HCT116 (cell line): ENCODE measurements at regions of chr3 and their contacts with region 1.

Region 1: GRCh38 chr3:187745201-187746058 is at the start of gene BCL6:
- DNase-seq: peak; percentile 98
- ATAC-seq: peak; percentile 67
- H3K4me3 ChIP-seq: peak within 1 kb of the TSS; percentile 89 to 91
- H3K27ac ChIP-seq: peak within 1 kb of the TSS; percentile 78
- H3K4me1 ChIP-seq: peaks cover 29 to 65% of the 10 kb centered on the region in 2 experiments; a peak in 3 of 4 replicates
- H3K27me3 ChIP-seq: no peaks in the 10 kb centered on the region
- CTCF ChIP-seq: no peak
- POLR2A ChIP-seq: peak; percentile 86
- RAD21 ChIP-seq: no peak
- total RNA-seq, gene BCL6: 17.5 TPM

Region 2: DNA sequence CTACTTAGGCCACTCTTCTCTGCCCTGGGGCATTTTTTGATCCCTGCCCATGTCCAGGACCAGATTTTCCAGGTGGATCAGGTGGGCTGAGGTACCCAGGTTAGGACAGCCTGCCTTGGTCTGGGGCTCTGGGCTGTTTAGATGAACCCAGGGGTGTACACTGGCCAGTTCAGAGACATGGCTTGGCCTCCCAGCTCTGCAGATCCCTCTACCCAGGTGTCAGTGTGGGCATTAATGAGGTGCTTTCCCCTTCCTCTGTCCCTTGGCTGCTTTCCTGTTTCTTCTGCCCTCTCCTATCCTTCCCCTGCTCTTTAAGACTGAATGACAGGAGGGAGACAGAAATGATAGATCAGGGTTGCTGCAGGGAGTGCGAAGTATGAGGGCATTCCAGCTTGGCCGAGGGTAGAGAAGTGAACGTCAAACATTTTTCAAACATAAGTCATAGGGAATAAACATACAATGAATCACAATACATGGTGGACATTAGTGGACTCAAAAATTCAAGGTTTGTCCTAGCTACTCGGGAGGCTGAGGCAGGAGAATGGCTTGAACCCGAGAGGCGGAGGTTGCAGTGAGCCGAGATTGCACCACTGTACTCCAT is 517.7 kb before region 1 on chr3:
- CTCF ChIA-PET with region 1: no interaction called
- POLR2A ChIA-PET with region 1: no interaction called
- RAD21 ChIA-PET with region 1: no interaction called
- intact Hi-C with region 1: no loop called
- DNase-seq: no peak
- ATAC-seq: no peak; the same call in 1 of the 2 replicates
- H3K4me3 ChIP-seq: no peak overlapping the region
- H3K27ac ChIP-seq: no peak overlapping the region
- H3K4me1 ChIP-seq: peaks cover 0 to 6% of the 10 kb centered on the region in 2 experiments; a peak in 2 of 4 replicates
- H3K27me3 ChIP-seq: peaks cover 23% of the 10 kb centered on the region; the same call in 1 of the 2 replicates
- CTCF ChIP-seq: no peak
- POLR2A ChIP-seq: no peak
- RAD21 ChIP-seq: no peak

Region 3: DNA sequence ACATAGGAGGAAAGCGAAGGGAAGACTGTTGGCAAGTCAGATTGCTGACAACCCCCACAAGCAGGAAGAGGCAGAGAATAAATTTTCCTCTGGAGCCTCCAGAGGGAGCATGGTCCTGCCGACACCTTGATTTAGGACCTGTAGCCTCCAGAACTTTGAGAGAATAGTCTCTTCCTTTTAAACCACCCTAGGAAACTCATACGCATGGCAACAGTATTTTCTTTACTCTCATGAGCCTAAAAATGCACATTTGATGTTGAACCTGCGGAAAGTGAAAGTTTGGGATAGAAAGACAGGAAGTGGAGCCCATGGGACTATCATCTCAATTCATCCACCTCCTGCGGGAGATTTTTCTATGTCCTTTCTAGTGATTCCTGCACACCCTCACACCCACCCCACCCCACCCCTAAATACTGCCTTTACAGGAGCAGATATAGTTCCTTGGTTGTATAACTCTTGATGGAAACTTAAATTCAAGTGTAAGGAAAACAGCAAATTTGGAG is 291.8 kb after region 1 on chr3:
- CTCF ChIA-PET with region 1: interaction called, 3 read pairs
- POLR2A ChIA-PET with region 1: no interaction called
- RAD21 ChIA-PET with region 1: no interaction called
- intact Hi-C with region 1: loop called (anchors 10 kb)
- DNase-seq: peak; percentile 28
- ATAC-seq: peak; percentile 91
- H3K4me3 ChIP-seq: no peak overlapping the region
- H3K27ac ChIP-seq: no peak overlapping the region
- H3K4me1 ChIP-seq: peaks cover 2 to 16% of the 10 kb centered on the region in 2 experiments; a peak in 3 of 4 replicates
- H3K27me3 ChIP-seq: no peaks in the 10 kb centered on the region
- CTCF ChIP-seq: peak; percentile 50 to 66 (median 53); a peak in 5 of 6 replicates
- POLR2A ChIP-seq: no peak
- RAD21 ChIP-seq: peak; percentile 80

Region 4: DNA sequence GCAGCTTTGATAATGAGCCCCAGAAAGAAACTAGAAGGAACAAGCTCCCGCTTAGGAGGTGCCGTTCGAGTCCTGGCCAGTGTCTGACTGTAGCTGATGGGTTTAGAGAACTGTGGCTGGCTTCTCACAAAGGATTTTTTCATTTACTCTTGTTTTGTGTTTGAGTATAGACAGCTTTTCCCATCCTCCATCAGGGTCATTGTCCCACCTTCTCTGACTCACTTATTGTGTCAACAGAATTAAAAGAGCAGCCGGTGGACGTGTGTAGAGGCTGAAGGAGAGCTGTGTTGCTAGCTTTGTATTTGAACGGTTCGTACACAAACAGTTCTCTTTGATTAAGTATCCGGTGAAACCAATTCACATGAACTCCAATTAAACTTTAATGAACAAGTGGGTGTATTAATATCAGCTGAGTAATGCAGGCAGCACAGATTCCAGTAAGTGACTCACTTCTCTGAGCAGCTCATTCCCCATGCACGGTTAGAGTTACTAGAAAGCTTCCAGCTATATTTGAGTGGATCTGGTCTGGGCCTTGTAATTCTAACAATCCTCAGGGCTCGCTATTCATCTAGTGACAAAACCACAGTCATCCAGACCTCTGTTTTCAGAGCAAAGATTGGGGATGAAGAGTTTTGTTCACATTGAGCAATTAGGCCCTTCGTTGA is 549.5 kb after region 1 on chr3:
- CTCF ChIA-PET with region 1: interaction called, 3 read pairs
- POLR2A ChIA-PET with region 1: interaction called, 4 read pairs
- RAD21 ChIA-PET with region 1: no interaction called
- intact Hi-C with region 1: loop called (anchors 2 kb)
- DNase-seq: peak; percentile 90
- ATAC-seq: peak; percentile 84
- H3K4me3 ChIP-seq: peak overlapping the region; percentile 1 to 47; a peak in 3 of 4 replicates
- H3K27ac ChIP-seq: peak overlapping the region; percentile 67
- H3K4me1 ChIP-seq: peaks cover 61 to 85% of the 10 kb centered on the region in 2 experiments
- H3K27me3 ChIP-seq: no peaks in the 10 kb centered on the region
- CTCF ChIP-seq: 0 out of 6 replicates have a peak, but pooled peaks of 1 of the 3 experiments have one; percentile 4
- POLR2A ChIP-seq: no peak
- RAD21 ChIP-seq: peak; percentile 51

Region 5: DNA sequence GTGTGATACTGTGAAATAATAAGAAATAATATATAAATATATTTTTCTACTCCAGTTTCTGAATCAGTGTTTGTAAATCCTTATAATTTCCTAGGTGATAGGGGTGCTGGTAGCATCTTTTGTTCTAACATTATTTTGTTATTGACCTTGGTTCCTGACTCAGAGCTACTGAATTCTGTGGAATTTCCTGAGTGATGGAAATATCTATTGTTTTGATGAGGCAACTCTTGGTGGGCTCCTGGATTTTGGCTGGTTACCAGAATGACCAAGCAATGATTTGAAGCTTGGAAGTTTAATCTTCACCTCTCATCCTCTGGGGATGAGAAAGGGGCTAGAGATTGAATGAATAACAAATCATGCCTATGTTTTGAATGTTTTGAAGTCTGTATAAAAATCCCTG is 785.8 kb after region 1 on chr3:
- CTCF ChIA-PET with region 1: no interaction called
- POLR2A ChIA-PET with region 1: no interaction called
- RAD21 ChIA-PET with region 1: no interaction called
- intact Hi-C with region 1: loop called (anchors 10 kb)
- DNase-seq: no peak
- ATAC-seq: no peak
- H3K4me3 ChIP-seq: no peak overlapping the region
- H3K27ac ChIP-seq: no peak overlapping the region
- H3K4me1 ChIP-seq: no peaks in the 10 kb centered on the region
- H3K27me3 ChIP-seq: no peaks in the 10 kb centered on the region
- CTCF ChIP-seq: no peak
- POLR2A ChIP-seq: no peak
- RAD21 ChIP-seq: no peak